ENCODE measurements at regions of chr12 and their contacts with region 1.

Region 1: GRCh38 chr12:43586646-43587245 is 34.7 kb upstream of the ADAMTS20 start:
- DNase-seq: no peak
- H3K4me3 Mint-ChIP-seq: no peak overlapping the region
- H3K27ac Mint-ChIP-seq: no peak overlapping the region
- H3K4me1 Mint-ChIP-seq: no peaks in the 10 kb centered on the region
- H3K27me3 Mint-ChIP-seq: no peaks in the 10 kb centered on the region
- CTCF ChIP-seq: no peak

Region 2: DNA sequence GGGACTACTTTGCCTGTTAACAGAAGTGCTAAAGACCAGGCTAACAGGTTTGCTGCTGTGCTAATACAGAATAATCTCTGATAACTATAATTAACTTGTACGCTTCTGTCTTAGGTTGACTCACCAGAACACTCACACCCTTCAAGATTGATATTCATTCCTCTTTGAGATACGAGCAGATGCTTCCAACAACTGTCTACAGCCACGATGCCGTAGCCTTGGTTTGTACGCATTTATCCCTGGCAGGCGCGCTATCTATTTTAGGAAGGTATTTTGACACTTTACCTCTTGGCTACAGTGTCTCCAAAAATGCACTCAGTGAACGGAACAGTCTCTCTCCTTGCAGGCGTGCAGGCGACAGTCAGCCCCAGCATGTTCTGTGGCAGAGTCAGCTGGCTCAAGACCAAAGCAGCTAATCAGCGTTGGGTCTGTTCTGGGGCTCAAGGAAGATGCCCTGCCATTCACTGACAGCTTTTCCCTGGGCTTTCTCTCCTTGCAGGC is 850.8 kb before region 1 on chr12:
- CTCF ChIA-PET with region 1: no interaction called
- intact Hi-C with region 1: no loop called
- DNase-seq: no peak
- H3K4me3 Mint-ChIP-seq: no peak overlapping the region
- H3K27ac Mint-ChIP-seq: no peak overlapping the region
- H3K4me1 Mint-ChIP-seq: no peaks in the 10 kb centered on the region
- H3K27me3 Mint-ChIP-seq: no peaks in the 10 kb centered on the region
- CTCF ChIP-seq: no peak

Region 3: GRCh38 chr12:43407816-43408645 is 178.7 kb before region 1 on chr12:
- CTCF ChIA-PET with region 1: interaction called, 12 read pairs
- intact Hi-C with region 1: no loop called
- DNase-seq: no peak
- H3K4me3 Mint-ChIP-seq: no peak overlapping the region
- H3K27ac Mint-ChIP-seq: no peak overlapping the region
- H3K4me1 Mint-ChIP-seq: no peaks in the 10 kb centered on the region
- H3K27me3 Mint-ChIP-seq: no peaks in the 10 kb centered on the region
- CTCF ChIP-seq: no peak

Measured in Calu3 (cell line).